Activated naive CD4-positive, alpha-beta T cell treated with anti-CD3 and anti-CD28 coated beads for 36 hours (primary cell): ENCODE measurements at regions of chr1 and their contacts with region 1.

Region 1: GRCh38 chr1:207499573-207499972 is 3.6 kb downstream of the CR1 start:
- DNase-seq: peak; percentile 88
- H3K4me3 Mint-ChIP-seq: no peak overlapping the region
- H3K27ac Mint-ChIP-seq: peak overlapping the region; percentile 51
- H3K4me1 Mint-ChIP-seq: peaks cover 26% of the 10 kb centered on the region
- H3K27me3 Mint-ChIP-seq: peaks cover 25% of the 10 kb centered on the region

Region 2: GRCh38 chr1:206808615-206809014 is 691.0 kb before region 1 on chr1:
- CTCF ChIA-PET with region 1: no interaction called
- intact Hi-C with region 1: loop called (anchors 2 kb)
- DNase-seq: peak; percentile 70
- H3K4me3 Mint-ChIP-seq: no peak overlapping the region
- H3K27ac Mint-ChIP-seq: no peak overlapping the region
- H3K4me1 Mint-ChIP-seq: peaks cover 42% of the 10 kb centered on the region
- H3K27me3 Mint-ChIP-seq: no peaks in the 10 kb centered on the region

Region 3: DNA sequence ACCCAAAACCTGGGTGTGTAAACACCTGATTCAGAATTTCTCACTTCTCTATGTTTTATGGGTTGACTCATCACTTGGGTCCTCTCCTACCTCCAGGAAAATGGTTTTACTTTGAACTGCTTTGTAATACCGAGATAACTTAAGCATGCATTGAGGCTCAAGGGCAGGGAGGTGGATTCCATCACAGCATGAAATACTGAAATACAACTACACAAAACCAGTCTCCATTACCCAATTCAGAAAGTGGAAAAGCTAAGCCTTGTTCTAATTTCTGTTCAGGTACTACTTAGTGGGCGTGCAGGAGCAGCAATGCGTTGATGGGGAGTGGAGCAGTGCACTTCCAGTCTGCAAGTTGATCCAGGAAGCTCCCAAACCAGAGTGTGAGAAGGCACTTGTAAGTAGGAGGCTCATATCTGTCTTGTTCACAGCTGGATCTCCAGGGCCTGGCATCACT is 401.7 kb before region 1 on chr1:
- CTCF ChIA-PET with region 1: interaction called, 12 read pairs
- intact Hi-C with region 1: loop called (anchors 1 kb)
- DNase-seq: peak; percentile 65
- H3K4me3 Mint-ChIP-seq: no peak overlapping the region
- H3K27ac Mint-ChIP-seq: peak overlapping the region; percentile 86
- H3K4me1 Mint-ChIP-seq: peaks cover 9% of the 10 kb centered on the region
- H3K27me3 Mint-ChIP-seq: peaks cover 4% of the 10 kb centered on the region

Region 4: DNA sequence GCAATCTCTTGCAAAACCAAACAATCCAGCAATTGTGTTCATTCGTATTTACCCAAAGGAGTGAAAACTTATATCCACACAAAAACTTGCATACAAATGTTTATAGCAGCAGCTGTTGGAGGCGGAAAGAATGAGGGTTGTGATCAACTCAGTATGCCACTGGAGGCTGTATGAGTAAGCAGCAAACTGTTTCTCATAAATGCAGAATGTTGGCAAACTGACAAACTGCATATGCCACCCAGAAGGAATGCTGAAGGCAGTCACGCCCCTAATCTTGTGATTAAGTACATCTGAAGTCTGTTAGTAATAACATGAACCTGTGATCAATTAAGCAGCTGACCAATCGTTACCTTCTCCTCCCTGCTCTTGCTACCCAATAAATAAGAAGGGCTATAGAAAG is 106.0 kb before region 1 on chr1:
- CTCF ChIA-PET with region 1: interaction called, 4 read pairs
- intact Hi-C with region 1: loop called (anchors 1 kb)
- DNase-seq: no peak
- H3K4me3 Mint-ChIP-seq: no peak overlapping the region
- H3K27ac Mint-ChIP-seq: no peak overlapping the region
- H3K4me1 Mint-ChIP-seq: peaks cover 20% of the 10 kb centered on the region
- H3K27me3 Mint-ChIP-seq: peaks cover 2% of the 10 kb centered on the region

Region 5: GRCh38 chr1:207454046-207454964 is 45.3 kb before region 1 on chr1 and contains the start of gene CR2:
- CTCF ChIA-PET with region 1: interaction called, 7 read pairs
- intact Hi-C with region 1: loop called (anchors 1 kb)
- DNase-seq: peak; percentile 64
- H3K4me3 Mint-ChIP-seq: peak within 1 kb of the TSS; percentile 65
- H3K27ac Mint-ChIP-seq: no peak within 1 kb of the TSS
- H3K4me1 Mint-ChIP-seq: peaks cover 7% of the 10 kb centered on the region
- H3K27me3 Mint-ChIP-seq: peaks cover 18% of the 10 kb centered on the region
- total RNA-seq, gene CR2: 0.36 to 1.8 TPM

Region 6: GRCh38 chr1:207751790-207752455 is 252.3 kb after region 1 on chr1 and contains the start of gene CD46:
- CTCF ChIA-PET with region 1: no interaction called
- intact Hi-C with region 1: loop called (anchors 5 kb)
- DNase-seq: peak; percentile 97
- H3K4me3 Mint-ChIP-seq: peak within 1 kb of the TSS; percentile 92
- H3K27ac Mint-ChIP-seq: peak within 1 kb of the TSS; percentile 98
- H3K4me1 Mint-ChIP-seq: peaks cover 59% of the 10 kb centered on the region
- H3K27me3 Mint-ChIP-seq: no peaks in the 10 kb centered on the region
- total RNA-seq, gene CD46: 91.0 to 93.4 TPM